WTC11 (cell line): ENCODE measurements at regions of chr16 and their contacts with region 1.

Region 1: GRCh38 chr16:82263521-82264143 is 93.6 kb upstream of the MPHOSPH6 start:
- DNase-seq: peak; percentile 63
- ATAC-seq: peak; percentile 95
- H3K4me3 Mint-ChIP-seq: no peak overlapping the region
- H3K27ac Mint-ChIP-seq: no peak overlapping the region
- H3K4me1 Mint-ChIP-seq: peaks cover 14% of the 10 kb centered on the region
- H3K27me3 Mint-ChIP-seq: no peaks in the 10 kb centered on the region; the same call in 1 of the 2 replicates
- CTCF ChIP-seq: peak; percentile 79

Region 2: DNA sequence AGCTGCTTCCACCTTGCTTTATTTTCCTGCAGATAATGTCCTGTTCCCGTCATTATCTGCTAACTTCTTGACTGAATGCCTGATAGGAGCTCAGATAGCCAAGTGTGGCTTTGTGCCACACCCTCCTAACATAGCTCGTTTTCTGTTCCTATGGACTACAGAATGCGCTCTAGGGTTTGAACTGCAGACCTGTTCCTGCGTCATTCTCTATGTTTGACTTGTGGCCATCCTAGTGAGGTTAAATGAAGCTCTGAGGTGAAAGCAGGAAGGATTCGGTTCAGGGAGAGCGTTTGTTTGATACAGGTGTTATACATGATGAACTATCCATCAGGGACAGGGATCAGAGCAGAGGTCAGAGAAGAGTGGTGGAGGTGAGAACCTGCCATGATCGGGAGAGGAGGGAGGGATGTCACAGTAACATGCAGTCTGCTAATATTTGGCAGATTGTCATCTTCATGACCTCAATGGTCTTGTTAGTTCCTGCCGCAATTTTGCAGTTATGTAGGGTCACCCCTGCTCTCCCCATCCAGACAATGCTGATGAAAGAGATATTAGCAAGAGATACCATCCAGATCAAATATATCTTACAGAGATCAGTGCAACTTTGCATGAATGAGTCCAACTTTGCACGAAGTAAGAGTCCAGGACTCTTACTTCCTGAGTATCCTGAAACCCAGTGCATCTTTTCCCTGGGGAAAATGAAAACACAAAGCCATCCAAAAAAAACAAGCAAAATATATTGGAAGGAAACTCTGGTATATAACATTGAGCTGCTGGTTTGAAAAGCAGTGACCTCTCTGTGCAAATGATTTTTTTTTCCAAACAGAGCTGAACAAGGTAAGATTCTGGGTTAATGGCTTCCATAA is 126.4 kb before region 1 on chr16:
- CTCF ChIA-PET with region 1: no interaction called
- POLR2A ChIA-PET with region 1: no interaction called
- DNase-seq: no peak
- ATAC-seq: no peak
- H3K4me3 Mint-ChIP-seq: no peak overlapping the region
- H3K27ac Mint-ChIP-seq: no peak overlapping the region
- H3K4me1 Mint-ChIP-seq: peaks cover 21% of the 10 kb centered on the region
- H3K27me3 Mint-ChIP-seq: no peaks in the 10 kb centered on the region
- CTCF ChIP-seq: no peak

Region 3: GRCh38 chr16:82229796-82230619 is 33.6 kb before region 1 on chr16:
- CTCF ChIA-PET with region 1: interaction called, 10 read pairs
- POLR2A ChIA-PET with region 1: no interaction called
- DNase-seq: peak; percentile 86
- ATAC-seq: peak; percentile 94
- H3K4me3 Mint-ChIP-seq: no peak overlapping the region
- H3K27ac Mint-ChIP-seq: no peak overlapping the region
- H3K4me1 Mint-ChIP-seq: peaks cover 8% of the 10 kb centered on the region; the same call in 1 of the 2 replicates
- H3K27me3 Mint-ChIP-seq: no peaks in the 10 kb centered on the region
- CTCF ChIP-seq: peak; percentile 86

Region 4: DNA sequence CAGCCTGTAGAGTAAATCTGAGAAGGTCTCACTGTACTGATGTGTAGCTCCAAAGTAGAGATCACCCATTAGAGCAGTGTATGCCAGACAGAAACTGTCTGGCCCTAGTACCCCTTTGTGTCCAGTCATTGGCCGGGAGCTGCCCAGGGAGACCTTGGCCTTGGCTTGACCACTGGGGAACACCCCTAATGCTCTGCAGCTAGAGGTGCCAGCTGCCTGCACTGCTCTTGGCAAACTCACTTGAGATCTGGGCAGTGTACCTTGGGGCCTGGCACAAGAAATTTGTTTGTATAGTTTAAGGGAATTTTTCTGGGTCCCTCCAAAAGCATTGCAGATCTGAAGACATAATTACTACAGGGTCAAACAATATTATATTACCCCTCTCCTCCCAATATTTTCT is 15.0 kb before region 1 on chr16:
- CTCF ChIA-PET with region 1: interaction called, 21 read pairs
- POLR2A ChIA-PET with region 1: no interaction called
- DNase-seq: no peak
- ATAC-seq: no peak
- H3K4me3 Mint-ChIP-seq: no peak overlapping the region
- H3K27ac Mint-ChIP-seq: no peak overlapping the region
- H3K4me1 Mint-ChIP-seq: no peaks in the 10 kb centered on the region
- H3K27me3 Mint-ChIP-seq: 0 out of 2 replicates have a peak, but pooled peaks cover 2% of the 10 kb centered on the region
- CTCF ChIP-seq: no peak

Region 5: DNA sequence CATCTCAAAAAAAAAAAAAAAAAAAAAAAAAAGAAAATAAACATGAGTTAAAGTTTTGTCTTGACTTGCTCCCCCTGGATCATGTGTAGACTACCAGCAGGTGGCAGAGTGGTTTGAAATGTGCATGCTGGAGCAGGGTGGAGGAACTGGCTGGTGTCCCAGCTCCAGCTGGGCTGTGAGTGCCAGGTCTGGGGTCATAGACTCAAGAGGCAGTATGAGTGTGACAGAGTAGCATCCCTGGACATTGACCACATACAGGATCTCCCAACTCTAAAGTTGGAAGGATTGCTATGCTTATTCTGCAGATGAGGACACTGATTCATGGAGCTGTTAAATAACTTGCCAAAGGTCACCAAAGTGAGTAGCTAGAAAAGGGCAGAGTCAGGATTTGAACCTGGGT is 104.4 kb after region 1 on chr16:
- CTCF ChIA-PET with region 1: interaction called, 19 read pairs
- POLR2A ChIA-PET with region 1: no interaction called
- DNase-seq: peak; percentile 46
- ATAC-seq: peak; percentile 85
- H3K4me3 Mint-ChIP-seq: no peak overlapping the region
- H3K27ac Mint-ChIP-seq: no peak overlapping the region
- H3K4me1 Mint-ChIP-seq: no peaks in the 10 kb centered on the region
- H3K27me3 Mint-ChIP-seq: no peaks in the 10 kb centered on the region; the same call in 1 of the 2 replicates
- CTCF ChIP-seq: no peak

Region 6: GRCh38 chr16:82456683-82457082 is 193.1 kb after region 1 on chr16:
- CTCF ChIA-PET with region 1: interaction called, 106 read pairs
- POLR2A ChIA-PET with region 1: no interaction called
- DNase-seq: peak; percentile 73
- ATAC-seq: peak; percentile 98
- H3K4me3 Mint-ChIP-seq: no peak overlapping the region
- H3K27ac Mint-ChIP-seq: no peak overlapping the region
- H3K4me1 Mint-ChIP-seq: no peaks in the 10 kb centered on the region; the same call in 1 of the 2 replicates
- H3K27me3 Mint-ChIP-seq: no peaks in the 10 kb centered on the region
- CTCF ChIP-seq: peak; percentile 56

Region 7: GRCh38 chr16:82603784-82604411 is 340.3 kb after region 1 on chr16:
- CTCF ChIA-PET with region 1: interaction called, 21 read pairs
- POLR2A ChIA-PET with region 1: no interaction called
- DNase-seq: peak; percentile 59
- ATAC-seq: peak; percentile 74
- H3K4me3 Mint-ChIP-seq: no peak overlapping the region
- H3K27ac Mint-ChIP-seq: no peak overlapping the region
- H3K4me1 Mint-ChIP-seq: peaks cover 40% of the 10 kb centered on the region
- H3K27me3 Mint-ChIP-seq: no peaks in the 10 kb centered on the region; the same call in 1 of the 2 replicates
- CTCF ChIP-seq: no peak; the same call in 1 of the 2 replicates